Caco-2 (cell line): ENCODE measurements at regions of chr2 and their contacts with region 1.

Region 1: GRCh38 chr2:181715033-181715630 is 34.8 kb upstream of the NEUROD1 start:
- DNase-seq: peak; percentile 63 to 75
- H3K4me3 ChIP-seq: no peak overlapping the region
- H3K4me3 Mint-ChIP-seq: no peak overlapping the region
- H3K27ac Mint-ChIP-seq: no peak overlapping the region
- H3K4me1 ChIP-seq: no peaks in the 10 kb centered on the region
- H3K4me1 Mint-ChIP-seq: no peaks in the 10 kb centered on the region
- H3K27me3 ChIP-seq: no peaks in the 10 kb centered on the region
- H3K27me3 Mint-ChIP-seq: peaks cover 3% of the 10 kb centered on the region
- CTCF ChIP-seq: peak; percentile 67 to 84

Region 2: GRCh38 chr2:181077128-181077709 is 637.9 kb before region 1 on chr2:
- CTCF ChIA-PET with region 1: no interaction called
- POLR2A ChIA-PET with region 1: no interaction called
- intact Hi-C with region 1: loop called (anchors 1 kb)
- DNase-seq: peak in 1 of 2 experiments; percentile 36
- H3K4me3 ChIP-seq: no peak overlapping the region
- H3K4me3 Mint-ChIP-seq: no peak overlapping the region
- H3K27ac Mint-ChIP-seq: no peak overlapping the region
- H3K4me1 ChIP-seq: no peaks in the 10 kb centered on the region
- H3K4me1 Mint-ChIP-seq: no peaks in the 10 kb centered on the region
- H3K27me3 ChIP-seq: no peaks in the 10 kb centered on the region
- H3K27me3 Mint-ChIP-seq: peaks cover 2% of the 10 kb centered on the region
- CTCF ChIP-seq: peak; percentile 51 to 72

Region 3: DNA sequence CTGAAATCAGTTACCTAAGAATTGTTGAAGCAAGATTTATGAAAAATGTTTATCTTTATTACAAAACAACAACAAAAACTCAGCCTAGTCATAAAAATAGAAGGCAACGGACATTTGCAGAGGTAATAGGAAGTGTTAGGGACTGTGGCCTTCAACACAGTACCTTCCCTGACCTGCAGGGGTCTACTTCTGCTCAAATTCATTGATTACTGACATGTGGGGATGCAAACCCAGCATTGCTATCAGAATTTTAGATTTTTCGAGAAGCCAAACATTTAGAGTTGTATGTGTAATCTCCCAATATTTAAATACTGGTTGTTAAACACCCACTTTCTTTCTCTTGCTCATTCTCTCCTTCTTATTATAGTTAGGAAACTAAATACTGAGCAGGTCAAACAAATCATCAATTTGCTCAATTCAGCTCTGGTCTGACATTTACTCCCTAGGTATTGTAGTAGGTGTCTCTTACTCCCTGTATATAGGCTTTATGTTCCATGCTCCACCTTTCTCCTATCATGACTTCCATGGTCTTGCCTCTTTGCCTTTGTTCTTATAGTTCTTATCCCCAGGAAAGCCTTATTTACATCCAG is 536.2 kb before region 1 on chr2:
- CTCF ChIA-PET with region 1: no interaction called
- POLR2A ChIA-PET with region 1: no interaction called
- intact Hi-C with region 1: loop called (anchors 5 kb)
- DNase-seq: peak in 1 of 2 experiments; percentile 24
- H3K4me3 ChIP-seq: no peak overlapping the region
- H3K4me3 Mint-ChIP-seq: no peak overlapping the region
- H3K27ac Mint-ChIP-seq: no peak overlapping the region
- H3K4me1 ChIP-seq: no peaks in the 10 kb centered on the region
- H3K4me1 Mint-ChIP-seq: no peaks in the 10 kb centered on the region
- H3K27me3 ChIP-seq: no peaks in the 10 kb centered on the region
- H3K27me3 Mint-ChIP-seq: peaks cover 4% of the 10 kb centered on the region
- CTCF ChIP-seq: peak; percentile 59 to 65

Region 4: GRCh38 chr2:181438261-181438660 is 276.9 kb before region 1 on chr2:
- CTCF ChIA-PET with region 1: no interaction called
- POLR2A ChIA-PET with region 1: no interaction called
- intact Hi-C with region 1: loop called (anchors 2 kb)
- DNase-seq: no peak
- H3K4me3 ChIP-seq: no peak overlapping the region
- H3K4me3 Mint-ChIP-seq: no peak overlapping the region
- H3K27ac Mint-ChIP-seq: no peak overlapping the region
- H3K4me1 ChIP-seq: no peaks in the 10 kb centered on the region
- H3K4me1 Mint-ChIP-seq: no peaks in the 10 kb centered on the region
- H3K27me3 ChIP-seq: no peaks in the 10 kb centered on the region
- H3K27me3 Mint-ChIP-seq: peaks cover 6% of the 10 kb centered on the region
- CTCF ChIP-seq: peak; percentile 20 to 35

Region 5: DNA sequence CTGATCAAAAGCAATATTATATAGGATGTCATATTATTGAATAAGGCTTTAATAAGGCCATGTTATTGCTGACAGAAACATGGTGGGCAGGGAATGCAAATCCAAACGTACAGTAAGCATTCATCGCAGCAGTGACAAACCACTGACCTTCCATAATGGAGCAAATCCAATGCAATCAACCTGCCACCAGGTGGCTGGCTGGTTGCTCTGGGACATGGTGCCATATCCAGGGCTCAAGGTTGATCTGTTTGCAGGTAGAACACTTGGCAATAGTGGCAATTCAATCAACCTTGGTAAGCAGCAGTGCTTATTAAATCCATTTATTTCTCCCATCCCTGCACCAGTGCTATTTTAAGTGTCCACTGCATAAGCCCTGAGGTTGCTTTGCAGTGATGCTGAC is 133.6 kb before region 1 on chr2:
- CTCF ChIA-PET with region 1: interaction called, 5 read pairs
- POLR2A ChIA-PET with region 1: no interaction called
- intact Hi-C with region 1: loop called (anchors 1 kb)
- DNase-seq: peak in 1 of 2 experiments; percentile 32
- H3K4me3 ChIP-seq: no peak overlapping the region
- H3K4me3 Mint-ChIP-seq: no peak overlapping the region
- H3K27ac Mint-ChIP-seq: no peak overlapping the region
- H3K4me1 ChIP-seq: no peaks in the 10 kb centered on the region
- H3K4me1 Mint-ChIP-seq: no peaks in the 10 kb centered on the region
- H3K27me3 ChIP-seq: no peaks in the 10 kb centered on the region; the same call in 1 of the 2 replicates
- H3K27me3 Mint-ChIP-seq: peaks cover 3% of the 10 kb centered on the region
- CTCF ChIP-seq: peak; percentile 43 to 52